ENCODE measurements at regions of chr10 and their contacts with region 1.

Region 1: DNA sequence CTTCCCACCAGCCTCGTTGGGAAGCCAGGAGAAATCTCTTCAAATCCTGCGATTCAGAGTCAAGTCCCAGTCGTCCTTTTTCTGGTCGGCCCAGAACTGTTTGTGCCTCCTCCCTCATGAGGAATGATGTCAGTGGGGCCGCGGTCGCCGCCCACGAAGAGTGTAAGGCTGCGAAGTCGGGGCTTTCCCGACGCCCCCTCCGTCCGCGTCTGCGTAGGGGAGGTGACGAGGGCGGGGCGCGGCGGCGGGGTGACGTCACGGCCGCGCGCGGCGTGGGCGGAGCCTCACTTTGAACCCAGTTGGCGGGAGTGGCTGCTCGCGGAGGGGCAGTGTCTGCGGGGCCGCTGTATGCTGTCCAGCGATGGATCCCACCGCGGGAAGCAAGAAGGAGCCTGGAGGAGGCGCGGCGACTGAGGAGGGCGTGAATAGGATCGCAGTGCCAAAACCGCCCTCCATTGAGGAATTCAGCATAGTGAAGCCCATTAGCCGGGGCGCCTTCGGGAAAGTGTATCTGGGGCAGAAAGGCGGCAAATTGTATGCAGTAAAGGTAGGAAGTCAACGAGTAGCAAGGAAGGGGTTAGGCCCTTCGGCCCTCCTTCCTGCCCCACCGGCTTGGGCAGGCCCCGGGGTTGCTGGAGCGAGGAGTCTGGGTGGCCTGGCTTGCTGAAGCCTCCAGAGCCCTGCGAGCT is at the start of gene MASTL:
- DNase-seq: peak; percentile 97
- H3K4me3 ChIP-seq: peak within 1 kb of the TSS; percentile 69 to 90 (median 87)
- H3K27ac ChIP-seq: peak within 1 kb of the TSS; percentile 98 to 100 (median 98)
- H3K4me1 ChIP-seq: peaks cover 0 to 40% (median 24%) of the 10 kb centered on the region in 4 donors
- H3K27me3 ChIP-seq: no peaks in the 10 kb centered on the region
- CTCF ChIP-seq: no peak
- EP300 ChIP-seq: peak in 2 of 4 donors; percentile 27 to 52
- POLR2A ChIP-seq: peak; percentile 91 to 93
- total RNA-seq, gene MASTL: 4.7 to 5.4 (median 5.0) TPM

Region 2: GRCh38 chr10:26743091-26743490 is 412.1 kb before region 1 on chr10:
- intact Hi-C with region 1: no loop called
- DNase-seq: no peak
- H3K4me3 ChIP-seq: no peak overlapping the region
- H3K27ac ChIP-seq: no peak overlapping the region
- H3K4me1 ChIP-seq: no peaks in the 10 kb centered on the region
- H3K27me3 ChIP-seq: no peaks in the 10 kb centered on the region
- CTCF ChIP-seq: no peak
- EP300 ChIP-seq: no peak
- POLR2A ChIP-seq: no peak

Region 3: GRCh38 chr10:27099916-27100812 is 55.0 kb before region 1 on chr10 and contains the start of gene ANKRD26:
- intact Hi-C with region 1: loop called (anchors 2 kb)
- DNase-seq: peak; percentile 99
- H3K4me3 ChIP-seq: peak within 1 kb of the TSS; percentile 47 to 80 (median 64)
- H3K27ac ChIP-seq: peak within 1 kb of the TSS; percentile 86 to 93 (median 90)
- H3K4me1 ChIP-seq: peaks cover 0 to 18% (median 14%) of the 10 kb centered on the region in 4 donors
- H3K27me3 ChIP-seq: no peaks in the 10 kb centered on the region
- CTCF ChIP-seq: no peak
- EP300 ChIP-seq: no peak
- POLR2A ChIP-seq: peak; percentile 81
- total RNA-seq, gene ANKRD26: 8.6 to 20.5 (median 11.9) TPM

Region 4: DNA sequence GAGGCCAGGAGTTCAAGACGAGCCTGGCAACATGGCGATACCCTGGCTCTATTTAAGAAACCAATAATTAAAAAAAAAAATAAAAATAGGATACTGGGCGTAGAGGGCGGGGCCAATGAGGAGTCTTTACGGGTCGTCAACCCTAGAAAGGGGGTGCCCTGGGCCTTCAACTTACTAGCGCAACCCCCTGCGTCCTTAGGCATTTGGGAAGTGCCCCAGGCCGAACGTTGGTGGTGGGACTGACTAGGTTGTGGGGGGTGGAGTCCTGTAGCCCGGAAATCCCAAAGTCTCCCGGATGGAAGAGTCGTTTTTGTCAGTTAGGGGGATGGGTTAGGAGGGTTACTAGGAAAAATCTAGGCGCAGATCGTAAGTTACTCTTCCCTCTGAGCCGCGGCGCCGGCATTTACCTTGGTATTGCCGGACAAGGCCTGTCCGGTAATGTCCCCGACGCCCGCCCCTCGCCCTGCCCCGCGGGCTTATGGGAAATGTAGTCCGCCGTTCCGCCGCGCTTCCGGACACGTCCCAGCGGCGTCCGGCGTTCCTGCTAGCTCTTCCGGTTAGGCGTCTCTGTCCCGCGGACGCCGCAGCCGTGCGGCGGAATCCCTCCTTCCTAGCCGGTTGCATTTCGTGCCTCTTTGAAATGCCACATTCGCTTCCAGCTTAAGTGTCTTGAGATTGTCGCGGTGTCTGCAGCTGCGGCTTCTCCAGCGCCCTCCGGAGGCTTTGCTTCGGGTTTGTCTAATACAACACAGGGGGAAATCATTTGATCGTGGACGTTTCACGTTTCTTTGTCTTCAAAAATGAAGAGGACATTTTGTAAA is 86.7 kb after region 1 on chr10:
- intact Hi-C with region 1: loop called (anchors 1 kb)
- DNase-seq: peak; percentile 96
- H3K4me3 ChIP-seq: peak overlapping the region; percentile 58 to 87 (median 79)
- H3K27ac ChIP-seq: peak overlapping the region; percentile 95 to 98 (median 96)
- H3K4me1 ChIP-seq: peaks cover 0 to 34% (median 21%) of the 10 kb centered on the region in 4 donors
- H3K27me3 ChIP-seq: no peaks in the 10 kb centered on the region
- CTCF ChIP-seq: peak; percentile 9 to 50 (median 37)
- EP300 ChIP-seq: no peak
- POLR2A ChIP-seq: peak; percentile 93 to 95